ENCODE measurements at regions of chr7 and their contacts with region 1.

Region 1: DNA sequence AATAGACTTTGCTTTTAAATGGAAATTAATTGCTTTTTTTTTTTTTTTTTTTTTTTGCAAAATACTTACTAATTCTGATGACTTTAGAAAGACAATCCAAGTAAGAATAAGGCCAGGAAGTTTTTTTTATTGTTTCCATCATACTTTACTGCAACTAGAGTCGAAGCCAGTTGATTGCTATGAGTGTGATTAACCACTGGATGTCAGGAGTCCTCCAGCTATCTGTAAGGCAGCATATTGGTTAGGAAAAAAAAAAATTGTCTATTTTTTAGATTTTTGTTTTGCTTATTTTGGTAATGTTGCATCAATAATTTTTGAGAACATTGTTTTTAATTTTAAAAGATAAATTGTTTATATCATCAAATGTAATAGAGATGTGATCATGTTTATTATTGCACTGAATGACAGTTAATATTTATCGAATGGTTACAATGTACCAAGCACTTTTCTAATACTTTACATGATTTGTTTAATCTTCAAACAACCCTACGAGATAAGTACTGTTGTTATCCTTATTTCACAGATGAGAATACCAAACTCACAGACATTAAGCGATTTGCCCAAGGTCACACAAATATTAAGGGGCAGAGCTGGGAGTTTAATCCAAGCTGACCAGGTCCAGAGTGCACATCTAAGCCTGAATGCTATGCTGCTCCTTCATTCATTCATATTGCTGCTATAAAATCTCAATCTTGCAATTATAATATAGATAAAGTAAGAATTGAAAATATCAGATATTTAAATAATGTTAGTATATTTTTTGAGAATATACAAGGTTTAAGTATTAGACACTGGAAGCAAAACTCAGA is 19.9 kb upstream of the LMOD2 start:
- DNase-seq: peak; percentile 61
- ATAC-seq: peak; percentile 89
- H3K4me3 ChIP-seq: no peak overlapping the region
- H3K27ac ChIP-seq: no peak overlapping the region
- H3K4me1 ChIP-seq: no peaks in the 10 kb centered on the region
- H3K27me3 ChIP-seq: no peaks in the 10 kb centered on the region
- CTCF ChIP-seq: peak; percentile 73
- POLR2A ChIP-seq: no peak
- RAD21 ChIP-seq: peak; percentile 85

Region 2: GRCh38 chr7:123580406-123581161 is 55.2 kb before region 1 on chr7:
- CTCF ChIA-PET with region 1: interaction called, 3 read pairs
- POLR2A ChIA-PET with region 1: no interaction called
- dilution Hi-C with region 1: no loop called
- in situ Hi-C with region 1: no loop called
- intact Hi-C with region 1: loop called (anchors 2 kb)
- DNase-seq: peak; percentile 42
- ATAC-seq: peak; percentile 92
- H3K4me3 ChIP-seq: no peak overlapping the region
- H3K27ac ChIP-seq: no peak overlapping the region
- H3K4me1 ChIP-seq: no peaks in the 10 kb centered on the region
- H3K27me3 ChIP-seq: no peaks in the 10 kb centered on the region; the same call in none of the 2 replicates
- CTCF ChIP-seq: peak; percentile 60
- POLR2A ChIP-seq: no peak
- RAD21 ChIP-seq: peak; percentile 63

Region 3: DNA sequence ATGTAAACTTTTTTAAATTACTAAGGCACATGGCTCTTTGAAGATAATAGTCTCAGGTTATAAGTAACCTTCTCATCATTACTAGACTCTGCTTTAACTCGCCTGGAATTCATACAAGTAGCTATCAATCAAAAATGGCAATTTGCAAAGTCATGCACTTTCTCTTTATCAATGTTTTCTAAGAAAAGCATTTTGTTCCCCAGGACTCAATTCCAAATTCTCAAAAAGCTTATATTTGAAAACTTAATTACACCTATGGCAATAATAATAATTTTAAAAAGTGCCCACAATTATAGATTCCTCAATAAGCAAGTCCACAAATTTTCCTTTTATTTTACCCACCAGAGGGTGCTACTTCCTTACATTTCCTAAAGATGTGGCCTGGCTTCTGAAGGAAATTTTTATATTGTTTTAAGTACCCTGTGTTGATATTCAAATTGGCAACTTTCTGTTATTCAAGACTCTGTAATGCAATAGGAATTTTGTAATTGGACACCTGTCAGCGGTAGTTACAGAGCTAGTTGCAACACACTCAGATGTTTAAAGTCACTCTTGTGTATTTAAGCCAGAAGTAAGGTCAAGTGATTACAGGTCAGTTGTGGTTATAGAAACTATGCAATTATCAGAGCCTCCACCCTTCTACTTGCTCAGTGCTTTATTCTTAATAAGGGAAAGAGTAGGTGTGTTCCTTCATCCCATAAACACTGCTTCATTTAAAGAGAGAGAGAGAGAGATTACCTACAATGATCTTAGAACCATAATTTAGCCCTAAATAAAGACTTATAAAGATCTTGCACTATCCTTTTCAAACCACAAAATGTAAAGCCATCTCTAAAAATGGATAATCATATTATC is 162.1 kb after region 1 on chr7:
- CTCF ChIA-PET with region 1: no interaction called
- POLR2A ChIA-PET with region 1: no interaction called
- dilution Hi-C with region 1: no loop called
- in situ Hi-C with region 1: no loop called
- intact Hi-C with region 1: loop called (anchors 5 kb)
- DNase-seq: peak; percentile 78
- ATAC-seq: peak; percentile 77
- H3K4me3 ChIP-seq: no peak overlapping the region
- H3K27ac ChIP-seq: no peak overlapping the region
- H3K4me1 ChIP-seq: peaks cover 2% of the 10 kb centered on the region; the same call in 1 of the 2 replicates
- H3K27me3 ChIP-seq: 0 out of 2 replicates have a peak, but pooled peaks cover under 1% of the 10 kb centered on the region
- CTCF ChIP-seq: peak; percentile 61
- POLR2A ChIP-seq: no peak
- RAD21 ChIP-seq: peak; percentile 61

Region 4: DNA sequence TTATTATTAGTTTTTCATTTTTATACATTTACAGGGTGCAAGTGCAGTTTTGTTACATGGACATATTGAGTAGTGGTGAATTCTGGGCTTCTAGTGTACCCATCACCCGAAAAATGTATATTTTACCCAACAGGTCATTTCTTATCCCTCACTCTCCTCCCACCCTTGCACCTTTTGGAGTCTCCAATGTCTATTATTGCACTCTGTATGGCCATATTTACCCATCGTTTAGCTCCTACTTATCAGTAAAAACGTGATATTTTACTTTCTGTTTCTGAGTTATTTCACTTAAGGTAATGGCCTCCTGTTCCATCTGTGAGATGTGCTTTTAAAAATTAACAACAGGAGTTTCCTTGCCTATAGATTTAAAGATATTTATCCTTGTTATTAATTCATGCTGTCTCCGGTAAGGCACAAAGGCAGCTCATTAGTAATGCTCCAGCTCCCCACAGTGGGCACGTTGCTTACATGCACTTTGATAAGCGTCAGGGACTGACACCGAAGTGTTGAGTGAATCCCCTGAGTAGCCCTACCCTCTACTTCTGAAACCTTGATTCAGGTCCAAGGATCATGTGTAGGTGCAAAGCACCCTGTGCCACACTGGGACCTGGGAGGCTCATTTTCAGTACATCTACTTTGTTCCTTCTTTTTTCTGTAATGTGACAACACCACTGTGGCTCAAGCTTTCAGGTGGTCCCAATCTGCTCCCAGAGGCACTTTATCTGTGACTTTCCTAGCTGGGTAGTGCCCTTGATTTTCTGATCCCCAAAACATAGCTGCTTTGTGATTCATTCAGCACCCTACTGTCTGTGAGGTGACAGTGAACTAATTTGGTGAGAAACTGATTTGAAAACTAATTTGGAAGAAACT is 236.5 kb after region 1 on chr7:
- CTCF ChIA-PET with region 1: interaction called, 5 read pairs
- POLR2A ChIA-PET with region 1: no interaction called
- dilution Hi-C with region 1: no loop called
- in situ Hi-C with region 1: loop called (anchors 25 kb)
- intact Hi-C with region 1: loop called (anchors 1 kb)
- DNase-seq: peak; percentile 42
- ATAC-seq: peak; percentile 81
- H3K4me3 ChIP-seq: no peak overlapping the region
- H3K27ac ChIP-seq: no peak overlapping the region
- H3K4me1 ChIP-seq: no peaks in the 10 kb centered on the region
- H3K27me3 ChIP-seq: no peaks in the 10 kb centered on the region
- CTCF ChIP-seq: peak; percentile 53
- POLR2A ChIP-seq: no peak
- RAD21 ChIP-seq: peak; percentile 68